ENCODE measurements at regions of chr10 and their contacts with region 1.

Region 1: DNA sequence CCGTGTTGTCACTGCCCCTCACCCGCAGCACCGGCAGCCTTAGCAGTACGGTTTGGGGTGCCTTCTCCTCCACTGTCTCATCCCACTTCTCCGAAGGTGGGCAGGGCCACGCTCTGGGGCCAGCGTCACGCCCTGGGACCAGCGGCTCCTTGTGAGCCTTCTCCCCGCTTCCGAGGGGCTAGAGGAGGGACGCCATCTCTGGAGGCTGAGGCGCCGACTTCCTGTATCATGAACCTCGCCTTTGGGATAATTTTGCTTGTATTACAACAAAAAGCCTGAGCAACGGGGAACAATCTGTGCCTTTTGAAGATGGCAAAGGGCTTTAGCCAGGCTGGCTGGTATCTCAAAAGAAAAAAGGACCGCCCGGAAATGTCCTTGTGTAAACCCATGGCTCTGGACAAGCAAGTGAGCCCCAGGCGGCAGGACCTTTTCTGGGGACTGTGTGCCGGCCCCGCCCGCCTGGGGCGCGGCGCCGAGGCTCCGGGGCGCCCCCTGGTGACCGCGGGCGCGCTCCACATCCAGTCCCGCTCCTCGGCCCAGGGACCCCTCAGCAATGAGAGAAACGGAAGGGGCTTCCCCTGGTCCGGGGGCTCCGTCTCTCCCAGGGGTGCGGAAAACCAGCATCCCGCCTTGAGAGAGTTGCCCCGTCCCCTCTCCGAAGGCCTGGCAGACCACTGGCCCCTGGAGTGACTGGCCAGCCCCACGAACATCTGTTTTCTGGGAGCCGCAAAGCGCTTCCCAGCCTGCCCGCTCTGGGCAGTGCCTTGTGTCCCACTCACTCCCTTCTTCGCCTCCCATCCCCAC is 3.8 kb downstream of the DEPP1 start:
- DNase-seq: peak; percentile 13
- ATAC-seq: peak; percentile 84
- H3K4me3 ChIP-seq: peak overlapping the region; percentile 40 to 54
- H3K27ac ChIP-seq: peak overlapping the region; percentile 54; the same call in 1 of the 2 replicates
- H3K4me1 ChIP-seq: peaks cover 34 to 45% of the 10 kb centered on the region in 2 experiments
- H3K27me3 ChIP-seq: no peaks in the 10 kb centered on the region
- CTCF ChIP-seq: peak; percentile 68 to 96 (median 83)
- POLR2A ChIP-seq: no peak
- RAD21 ChIP-seq: no peak; the same call in none of the 2 replicates

Region 2: GRCh38 chr10:44959247-44960087 is 15.4 kb before region 1 on chr10 and contains the start of gene RASSF4:
- CTCF ChIA-PET with region 1: interaction called, 3 read pairs
- POLR2A ChIA-PET with region 1: interaction called, 11 read pairs
- RAD21 ChIA-PET with region 1: no interaction called
- intact Hi-C with region 1: loop called (anchors 1 kb)
- DNase-seq: peak; percentile 52
- ATAC-seq: peak; percentile 100
- H3K4me3 ChIP-seq: peak within 1 kb of the TSS; percentile 75 to 92
- H3K27ac ChIP-seq: peak within 1 kb of the TSS; percentile 50
- H3K4me1 ChIP-seq: peaks cover 3 to 17% of the 10 kb centered on the region in 2 experiments; a peak in 3 of 4 replicates
- H3K27me3 ChIP-seq: no peaks in the 10 kb centered on the region
- CTCF ChIP-seq: no peak
- POLR2A ChIP-seq: peak; percentile 44
- RAD21 ChIP-seq: no peak
- total RNA-seq, gene RASSF4: 2.8 TPM

Measured in HCT116 (cell line).